Left ventricle myocardium superior (tissue), 1 donor: ENCODE measurements at regions of chr10 and their contacts with region 1.

Region 1: GRCh38 chr10:103859161-103860086 is 4.0 kb upstream of the SH3PXD2A start:
- DNase-seq: no peak
- ATAC-seq: peak; percentile 66

Region 2: GRCh38 chr10:103605359-103606095 is 253.9 kb before region 1 on chr10:
- intact Hi-C with region 1: no loop called
- DNase-seq: no peak
- ATAC-seq: peak; percentile 65

Region 3: DNA sequence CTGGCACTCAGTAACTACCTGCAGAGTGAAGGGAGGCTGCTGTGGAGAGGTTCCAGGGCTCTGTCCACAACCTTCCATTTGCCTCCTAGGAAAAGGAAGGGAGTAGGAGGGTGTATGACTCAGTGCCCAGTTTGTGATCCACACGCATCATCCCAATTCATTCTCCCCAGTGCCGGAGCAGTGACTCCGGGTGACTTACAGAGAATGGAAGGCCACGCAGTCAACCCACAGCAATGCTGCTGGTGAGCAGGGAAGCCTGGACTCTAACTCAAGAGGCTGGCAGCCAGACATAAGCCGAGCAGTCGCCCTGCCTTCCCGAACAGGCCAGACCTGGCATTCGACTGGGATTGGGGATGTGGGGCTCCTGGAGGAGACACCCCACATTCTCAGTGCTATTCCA is 144.0 kb before region 1 on chr10:
- intact Hi-C with region 1: loop called (anchors 2 kb)
- DNase-seq: peak; percentile 22
- ATAC-seq: no peak